GM13976 (cell line): ENCODE measurements at regions of chr6 and their contacts with region 1.

Region 1: DNA sequence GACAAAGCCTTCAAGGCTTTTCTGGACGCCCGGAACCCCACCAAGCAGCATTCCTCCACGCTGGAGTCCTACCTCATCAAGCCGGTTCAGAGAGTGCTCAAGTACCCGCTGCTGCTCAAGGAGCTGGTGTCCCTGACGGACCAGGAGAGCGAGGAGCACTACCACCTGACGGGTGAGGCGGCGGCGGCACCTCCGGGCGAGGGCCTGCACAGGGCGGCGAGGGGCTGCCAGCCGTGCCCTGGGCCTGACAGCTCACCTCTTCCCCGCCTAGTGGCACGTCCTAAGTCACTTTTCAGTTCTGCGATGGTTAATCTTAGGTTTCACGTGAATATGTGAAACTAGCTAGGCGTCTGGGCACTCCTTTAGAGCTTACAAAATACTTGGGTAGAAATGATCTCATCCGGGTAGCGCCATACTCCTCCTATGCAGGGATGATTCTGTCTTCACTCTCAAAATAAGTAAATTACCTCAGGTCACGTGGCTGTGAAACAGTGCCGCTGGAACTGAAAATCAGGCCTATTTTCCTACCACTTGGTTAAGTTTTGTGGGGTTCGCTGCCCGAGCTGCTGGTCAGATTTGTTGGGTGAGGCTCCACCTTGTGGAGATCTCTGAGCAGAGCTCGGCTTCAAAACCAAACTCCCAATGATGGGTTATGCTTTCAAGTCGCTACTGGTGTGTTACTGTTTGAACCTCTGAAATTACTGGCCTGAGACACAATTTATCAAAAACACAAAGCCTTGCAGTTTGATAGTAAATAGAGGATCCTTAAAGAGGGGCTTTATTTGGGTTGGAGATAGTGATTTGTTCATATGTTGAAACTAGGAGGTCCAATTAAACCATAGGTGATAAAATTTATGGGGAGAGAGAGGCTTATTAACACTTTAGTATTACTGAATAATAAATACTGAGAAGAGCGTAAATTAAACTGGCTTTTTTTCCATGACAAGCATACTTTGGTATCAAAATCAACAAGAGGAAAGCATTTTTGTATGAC is 15.5 kb upstream of the CLDN20 start:
- DNase-seq: peak; percentile 76
- CTCF ChIP-seq: peak; percentile 68

Region 2: DNA sequence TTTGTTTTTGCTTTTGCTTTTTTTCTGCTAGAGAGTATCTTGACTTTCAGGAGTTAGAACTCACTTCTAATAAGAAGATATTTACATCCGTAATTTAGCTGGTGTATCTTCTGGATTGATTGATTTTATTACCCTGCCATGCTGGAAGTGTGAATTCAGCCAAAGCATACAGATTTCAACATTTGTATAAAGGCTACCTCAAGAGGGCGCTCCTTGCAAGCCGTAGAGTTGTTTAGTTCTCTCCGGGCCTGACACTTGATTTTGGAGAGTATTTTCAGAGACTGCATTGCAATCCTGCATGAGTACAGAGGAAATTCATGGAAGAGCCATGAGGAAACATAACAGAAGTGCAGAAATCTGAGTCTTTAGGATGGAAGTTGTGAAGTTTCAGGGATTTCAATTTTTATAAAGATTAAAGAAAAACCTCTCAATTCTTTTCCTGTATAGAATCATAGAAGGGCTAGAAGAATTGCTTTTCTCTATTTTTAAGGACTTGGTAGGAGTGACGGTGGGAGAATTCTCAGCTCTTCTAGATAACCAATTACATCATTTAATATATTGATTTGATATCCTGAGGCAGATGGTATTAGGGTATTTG is 319.9 kb before region 1 on chr6:
- in situ Hi-C with region 1: loop called (anchors 10 kb)
- DNase-seq: peak; percentile 75
- CTCF ChIP-seq: peak; percentile 58

Region 3: GRCh38 chr6:155314092-155314772 is 65.9 kb after region 1 on chr6 and contains the start of gene TFB1M:
- in situ Hi-C with region 1: no loop called
- DNase-seq: peak; percentile 95
- CTCF ChIP-seq: no peak